CD8-positive, alpha-beta T cell (primary cell): ENCODE measurements at regions of chr9 and their contacts with region 1.

Region 1: DNA sequence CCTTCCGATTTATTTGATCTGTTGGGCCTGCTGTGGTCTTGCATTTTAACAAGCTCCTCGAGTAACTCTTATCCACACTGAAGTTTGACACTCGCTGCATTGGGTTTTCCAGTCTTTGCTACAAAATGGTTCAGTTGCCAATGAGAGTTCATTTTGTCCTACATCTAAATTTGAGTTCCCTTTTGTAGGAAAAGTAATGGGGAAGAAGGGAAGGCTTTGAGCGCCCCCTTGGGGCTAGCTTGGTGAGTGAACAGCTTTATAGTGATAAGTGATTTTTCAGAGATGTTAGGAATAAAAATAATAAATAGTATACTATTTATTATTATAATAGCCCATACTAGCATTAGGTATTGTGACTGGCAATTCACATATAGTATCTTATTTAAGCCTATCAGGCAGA is 89.9 kb upstream of the GNAQ start:
- DNase-seq: peak; percentile 5 to 78 (median 57)
- ATAC-seq: no peak
- H3K4me3 ChIP-seq: no peak overlapping the region
- H3K4me3 Mint-ChIP-seq: no peak overlapping the region
- H3K27ac ChIP-seq: no peak overlapping the region
- H3K27ac Mint-ChIP-seq: no peak overlapping the region
- H3K4me1 ChIP-seq: peaks cover 25% of the 10 kb centered on the region
- H3K4me1 Mint-ChIP-seq: peaks cover 30% of the 10 kb centered on the region
- H3K27me3 ChIP-seq: no peaks in the 10 kb centered on the region
- H3K27me3 Mint-ChIP-seq: peaks cover under 1% of the 10 kb centered on the region
- CTCF ChIP-seq: peak; percentile 60

Region 2: GRCh38 chr9:77433675-77434445 is 687.6 kb before region 1 on chr9:
- CTCF ChIA-PET with region 1: no interaction called
- POLR2A ChIA-PET with region 1: no interaction called
- intact Hi-C with region 1: loop called in 1 of 2 experiments (anchors 5 kb)
- DNase-seq: peak in 7 of 9 experiments; percentile 9 to 59 (median 46)
- ATAC-seq: peak; percentile 70
- H3K4me3 ChIP-seq: no peak overlapping the region
- H3K4me3 Mint-ChIP-seq: no peak overlapping the region
- H3K27ac ChIP-seq: no peak overlapping the region
- H3K27ac Mint-ChIP-seq: no peak overlapping the region
- H3K4me1 ChIP-seq: no peaks in the 10 kb centered on the region
- H3K4me1 Mint-ChIP-seq: peaks cover 2% of the 10 kb centered on the region
- H3K27me3 ChIP-seq: no peaks in the 10 kb centered on the region
- H3K27me3 Mint-ChIP-seq: peaks cover 8% of the 10 kb centered on the region
- CTCF ChIP-seq: peak; percentile 88

Region 3: GRCh38 chr9:77456829-77457437 is 664.6 kb before region 1 on chr9:
- CTCF ChIA-PET with region 1: interaction called, 6 read pairs
- POLR2A ChIA-PET with region 1: no interaction called
- intact Hi-C with region 1: loop called in 1 of 2 experiments (anchors 1 kb)
- DNase-seq: peak; percentile 63 to 81 (median 74)
- ATAC-seq: peak; percentile 85
- H3K4me3 ChIP-seq: no peak overlapping the region
- H3K4me3 Mint-ChIP-seq: no peak overlapping the region
- H3K27ac ChIP-seq: no peak overlapping the region
- H3K27ac Mint-ChIP-seq: no peak overlapping the region
- H3K4me1 ChIP-seq: no peaks in the 10 kb centered on the region
- H3K4me1 Mint-ChIP-seq: peaks cover 15% of the 10 kb centered on the region
- H3K27me3 ChIP-seq: no peaks in the 10 kb centered on the region
- H3K27me3 Mint-ChIP-seq: no peaks in the 10 kb centered on the region
- CTCF ChIP-seq: peak; percentile 74

Region 4: GRCh38 chr9:77841739-77842386 is 279.6 kb before region 1 on chr9:
- CTCF ChIA-PET with region 1: interaction called, 5 read pairs
- POLR2A ChIA-PET with region 1: no interaction called
- intact Hi-C with region 1: loop called in 1 of 2 experiments (anchors 1 kb)
- DNase-seq: peak in 1 of 9 experiments; percentile 24
- ATAC-seq: no peak
- H3K4me3 ChIP-seq: no peak overlapping the region
- H3K4me3 Mint-ChIP-seq: no peak overlapping the region
- H3K27ac ChIP-seq: no peak overlapping the region
- H3K27ac Mint-ChIP-seq: no peak overlapping the region
- H3K4me1 ChIP-seq: no peaks in the 10 kb centered on the region
- H3K4me1 Mint-ChIP-seq: peaks cover 15% of the 10 kb centered on the region
- H3K27me3 ChIP-seq: no peaks in the 10 kb centered on the region
- H3K27me3 Mint-ChIP-seq: no peaks in the 10 kb centered on the region
- CTCF ChIP-seq: no peak

Region 5: GRCh38 chr9:77977210-77977611 is 144.3 kb before region 1 on chr9:
- CTCF ChIA-PET with region 1: interaction called, 56 read pairs
- POLR2A ChIA-PET with region 1: no interaction called
- intact Hi-C with region 1: loop called (anchors 1 to 5 kb)
- DNase-seq: peak in 8 of 9 experiments; percentile 19 to 73 (median 45)
- ATAC-seq: peak; percentile 53
- H3K4me3 ChIP-seq: no peak overlapping the region
- H3K4me3 Mint-ChIP-seq: peak overlapping the region; percentile 60
- H3K27ac ChIP-seq: peak overlapping the region in 1 of 2 experiments; percentile 68
- H3K27ac Mint-ChIP-seq: peak overlapping the region; percentile 78
- H3K4me1 ChIP-seq: peaks cover 48% of the 10 kb centered on the region
- H3K4me1 Mint-ChIP-seq: peaks cover 54% of the 10 kb centered on the region
- H3K27me3 ChIP-seq: no peaks in the 10 kb centered on the region
- H3K27me3 Mint-ChIP-seq: no peaks in the 10 kb centered on the region
- CTCF ChIP-seq: no peak

Region 6: GRCh38 chr9:78074385-78075291 is 46.9 kb before region 1 on chr9:
- CTCF ChIA-PET with region 1: interaction called, 3 read pairs
- POLR2A ChIA-PET with region 1: interaction called, 4 read pairs
- intact Hi-C with region 1: loop called in 1 of 2 experiments (anchors 5 kb)
- DNase-seq: peak in 2 of 9 experiments; percentile 39 to 57
- ATAC-seq: peak; percentile 36
- H3K4me3 ChIP-seq: peak overlapping the region in 1 of 2 experiments; percentile 7
- H3K4me3 Mint-ChIP-seq: peak overlapping the region; percentile 66
- H3K27ac ChIP-seq: peak overlapping the region; percentile 1 to 44
- H3K27ac Mint-ChIP-seq: peak overlapping the region; percentile 76
- H3K4me1 ChIP-seq: peaks cover 36% of the 10 kb centered on the region
- H3K4me1 Mint-ChIP-seq: peaks cover 49% of the 10 kb centered on the region
- H3K27me3 ChIP-seq: no peaks in the 10 kb centered on the region
- H3K27me3 Mint-ChIP-seq: no peaks in the 10 kb centered on the region
- CTCF ChIP-seq: no peak

Region 7: GRCh38 chr9:79592726-79593493 is 1471.4 kb after region 1 on chr9:
- CTCF ChIA-PET with region 1: no interaction called
- POLR2A ChIA-PET with region 1: no interaction called
- intact Hi-C with region 1: loop called in 1 of 2 experiments (anchors 5 kb)
- DNase-seq: peak in 2 of 9 experiments; percentile 64 to 78
- ATAC-seq: peak; percentile 85
- H3K4me3 ChIP-seq: no peak overlapping the region
- H3K4me3 Mint-ChIP-seq: peak overlapping the region; percentile 48
- H3K27ac ChIP-seq: no peak overlapping the region
- H3K27ac Mint-ChIP-seq: no peak overlapping the region
- H3K4me1 ChIP-seq: peaks cover 57% of the 10 kb centered on the region
- H3K4me1 Mint-ChIP-seq: peaks cover 81% of the 10 kb centered on the region
- H3K27me3 ChIP-seq: no peaks in the 10 kb centered on the region
- H3K27me3 Mint-ChIP-seq: no peaks in the 10 kb centered on the region
- CTCF ChIP-seq: no peak